CD8-positive, alpha-beta T cell (primary cell): ENCODE measurements at regions of chrX and their contacts with region 1.

Region 1: GRCh38 chrX:49043220-49043986 is at the start of gene TFE3:
- DNase-seq: peak; percentile 88 to 98 (median 93)
- ATAC-seq: peak; percentile 89
- H3K4me3 ChIP-seq: peak within 1 kb of the TSS; percentile 50 to 56
- H3K4me3 Mint-ChIP-seq: peak within 1 kb of the TSS; percentile 84
- H3K27ac ChIP-seq: peak within 1 kb of the TSS; percentile 73 to 92
- H3K27ac Mint-ChIP-seq: peak within 1 kb of the TSS; percentile 93
- H3K4me1 ChIP-seq: peaks cover 21% of the 10 kb centered on the region
- H3K4me1 Mint-ChIP-seq: peaks cover 35% of the 10 kb centered on the region
- H3K27me3 ChIP-seq: no peaks in the 10 kb centered on the region
- H3K27me3 Mint-ChIP-seq: no peaks in the 10 kb centered on the region
- CTCF ChIP-seq: no peak
- total RNA-seq, gene TFE3: 35.7 to 39.7 TPM

Region 2: DNA sequence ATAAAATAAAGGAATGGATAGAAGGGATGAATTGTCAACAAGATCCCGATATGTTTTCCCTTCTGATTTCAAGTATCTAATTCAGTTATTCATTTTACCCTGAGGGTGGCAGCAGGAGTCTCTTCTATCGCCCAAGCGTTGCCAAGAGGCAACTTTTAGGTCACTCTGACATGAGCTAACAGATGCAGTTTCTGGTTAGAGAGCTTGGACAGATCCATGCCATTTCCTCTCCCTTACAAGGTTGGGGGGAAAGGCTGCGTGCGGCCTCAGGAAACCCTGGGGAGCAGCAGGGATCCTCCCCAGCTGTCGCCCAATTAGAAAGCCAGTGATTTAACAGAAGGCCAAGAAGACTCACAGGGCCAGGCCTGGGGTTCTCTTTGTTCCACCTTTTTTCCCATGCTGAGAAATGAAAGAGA is 395.1 kb before region 1 on chrX:
- CTCF ChIA-PET with region 1: no interaction called
- POLR2A ChIA-PET with region 1: no interaction called
- intact Hi-C with region 1: loop called in 1 of 2 experiments (anchors 1 kb)
- DNase-seq: peak in 7 of 9 experiments; percentile 8 to 72 (median 41)
- ATAC-seq: peak; percentile 71
- H3K4me3 ChIP-seq: no peak overlapping the region
- H3K4me3 Mint-ChIP-seq: no peak overlapping the region
- H3K27ac ChIP-seq: no peak overlapping the region
- H3K27ac Mint-ChIP-seq: no peak overlapping the region
- H3K4me1 ChIP-seq: no peaks in the 10 kb centered on the region
- H3K4me1 Mint-ChIP-seq: peaks cover 7% of the 10 kb centered on the region
- H3K27me3 ChIP-seq: no peaks in the 10 kb centered on the region
- H3K27me3 Mint-ChIP-seq: no peaks in the 10 kb centered on the region
- CTCF ChIP-seq: peak; percentile 58

Region 3: DNA sequence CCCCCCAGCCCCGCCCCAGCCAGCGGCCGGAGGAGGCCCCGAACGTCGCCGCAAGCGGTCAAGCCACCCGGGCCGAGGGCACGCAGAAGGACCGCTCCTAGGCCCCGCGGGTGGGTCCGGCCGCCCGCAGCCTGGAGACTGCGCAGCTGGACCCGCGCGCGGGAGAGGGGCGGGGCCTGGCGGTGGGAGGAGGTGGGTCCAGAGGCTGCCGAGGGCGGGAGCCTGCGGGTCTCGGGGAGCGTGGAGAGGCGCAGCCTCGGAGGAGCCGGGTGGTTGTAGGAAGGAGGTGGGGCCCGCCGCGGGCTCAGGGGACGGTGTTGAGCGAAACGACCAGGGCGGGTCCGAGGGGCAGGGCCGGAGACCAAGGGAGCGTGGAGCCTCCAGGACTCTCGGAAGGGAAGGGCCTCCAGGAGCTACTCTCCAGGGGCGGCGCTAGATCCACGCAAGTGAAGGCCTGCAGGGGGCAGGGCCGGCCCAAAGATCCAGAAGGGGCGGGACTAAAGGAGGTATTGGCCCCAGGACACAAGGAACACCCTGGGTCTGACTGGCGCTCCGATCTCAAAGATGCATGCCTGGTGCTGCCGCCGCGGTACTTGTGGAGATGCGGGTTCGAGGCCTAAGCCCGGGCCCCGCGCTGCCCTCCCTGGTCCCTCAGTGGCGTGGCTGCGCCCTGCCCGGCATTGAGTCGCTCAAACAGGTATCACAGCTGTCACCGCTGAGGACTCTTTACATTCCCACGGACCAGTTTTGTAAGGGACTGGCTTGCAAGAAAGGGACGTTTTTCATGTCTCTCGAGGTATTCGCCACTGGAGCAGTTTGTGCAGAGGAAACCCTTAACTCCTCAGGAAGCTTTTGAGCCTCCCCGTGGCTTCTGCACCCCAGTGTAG is 151.8 kb before region 1 on chrX:
- CTCF ChIA-PET with region 1: no interaction called
- POLR2A ChIA-PET with region 1: no interaction called
- intact Hi-C with region 1: loop called in 1 of 2 experiments (anchors 2 kb)
- DNase-seq: peak; percentile 46 to 88 (median 75)
- ATAC-seq: peak; percentile 87
- H3K4me3 ChIP-seq: peak overlapping the region; percentile 56 to 59
- H3K4me3 Mint-ChIP-seq: peak overlapping the region; percentile 89
- H3K27ac ChIP-seq: peak overlapping the region; percentile 31 to 40
- H3K27ac Mint-ChIP-seq: peak overlapping the region; percentile 27
- H3K4me1 ChIP-seq: peaks cover 14% of the 10 kb centered on the region
- H3K4me1 Mint-ChIP-seq: peaks cover 29% of the 10 kb centered on the region
- H3K27me3 ChIP-seq: no peaks in the 10 kb centered on the region
- H3K27me3 Mint-ChIP-seq: no peaks in the 10 kb centered on the region
- CTCF ChIP-seq: peak; percentile 51

Region 4: GRCh38 chrX:48972220-48973167 is 70.9 kb before region 1 on chrX:
- CTCF ChIA-PET with region 1: interaction called, 5 read pairs
- POLR2A ChIA-PET with region 1: no interaction called
- intact Hi-C with region 1: loop called in 1 of 2 experiments (anchors 1 kb)
- DNase-seq: peak in 5 of 9 experiments; percentile 25 to 56 (median 37)
- ATAC-seq: peak; percentile 46
- H3K4me3 ChIP-seq: peak overlapping the region in 1 of 2 experiments; percentile 22
- H3K4me3 Mint-ChIP-seq: peak overlapping the region; percentile 61
- H3K27ac ChIP-seq: no peak overlapping the region
- H3K27ac Mint-ChIP-seq: no peak overlapping the region
- H3K4me1 ChIP-seq: peaks cover 11% of the 10 kb centered on the region
- H3K4me1 Mint-ChIP-seq: peaks cover 15% of the 10 kb centered on the region
- H3K27me3 ChIP-seq: no peaks in the 10 kb centered on the region
- H3K27me3 Mint-ChIP-seq: no peaks in the 10 kb centered on the region
- CTCF ChIP-seq: no peak

Region 5: GRCh38 chrX:49002091-49002935 is 41.1 kb before region 1 on chrX and contains the start of gene GRIPAP1:
- CTCF ChIA-PET with region 1: no interaction called
- POLR2A ChIA-PET with region 1: interaction called, 8 read pairs
- intact Hi-C with region 1: loop called (anchors 1 kb)
- DNase-seq: peak; percentile 63 to 95 (median 74)
- ATAC-seq: peak; percentile 79
- H3K4me3 ChIP-seq: peak within 1 kb of the TSS; percentile 82 to 87
- H3K4me3 Mint-ChIP-seq: peak within 1 kb of the TSS; percentile 98
- H3K27ac ChIP-seq: peak within 1 kb of the TSS; percentile 96 to 99
- H3K27ac Mint-ChIP-seq: peak within 1 kb of the TSS; percentile 99
- H3K4me1 ChIP-seq: peaks cover 16% of the 10 kb centered on the region
- H3K4me1 Mint-ChIP-seq: peaks cover 31% of the 10 kb centered on the region
- H3K27me3 ChIP-seq: no peaks in the 10 kb centered on the region
- H3K27me3 Mint-ChIP-seq: no peaks in the 10 kb centered on the region
- CTCF ChIP-seq: no peak
- total RNA-seq, gene GRIPAP1: 102 to 114 TPM

Region 6: GRCh38 chrX:49053223-49054072 is 10.0 kb after region 1 on chrX:
- CTCF ChIA-PET with region 1: interaction called, 4 read pairs
- POLR2A ChIA-PET with region 1: no interaction called
- intact Hi-C with region 1: loop called in 1 of 2 experiments (anchors 1 kb)
- DNase-seq: peak; percentile 8 to 82 (median 64)
- ATAC-seq: peak; percentile 82
- H3K4me3 ChIP-seq: peak overlapping the region; percentile 46 to 49
- H3K4me3 Mint-ChIP-seq: peak overlapping the region; percentile 87
- H3K27ac ChIP-seq: peak overlapping the region; percentile 66 to 82
- H3K27ac Mint-ChIP-seq: peak overlapping the region; percentile 93
- H3K4me1 ChIP-seq: peaks cover 12% of the 10 kb centered on the region
- H3K4me1 Mint-ChIP-seq: peaks cover 34% of the 10 kb centered on the region
- H3K27me3 ChIP-seq: no peaks in the 10 kb centered on the region
- H3K27me3 Mint-ChIP-seq: no peaks in the 10 kb centered on the region
- CTCF ChIP-seq: no peak

Region 7: GRCh38 chrX:49100704-49101628 is 57.6 kb after region 1 on chrX:
- CTCF ChIA-PET with region 1: no interaction called
- POLR2A ChIA-PET with region 1: no interaction called
- intact Hi-C with region 1: loop called (anchors 1 to 2 kb)
- DNase-seq: peak; percentile 71 to 94 (median 86)
- ATAC-seq: peak; percentile 89
- H3K4me3 ChIP-seq: peak overlapping the region; percentile 74
- H3K4me3 Mint-ChIP-seq: peak overlapping the region; percentile 89
- H3K27ac ChIP-seq: peak overlapping the region; percentile 71 to 81
- H3K27ac Mint-ChIP-seq: peak overlapping the region; percentile 94
- H3K4me1 ChIP-seq: peaks cover 6% of the 10 kb centered on the region
- H3K4me1 Mint-ChIP-seq: peaks cover 7% of the 10 kb centered on the region
- H3K27me3 ChIP-seq: no peaks in the 10 kb centered on the region
- H3K27me3 Mint-ChIP-seq: no peaks in the 10 kb centered on the region
- CTCF ChIP-seq: no peak